ENCODE measurements at regions of chr17 and their contacts with region 1.

Region 1: DNA sequence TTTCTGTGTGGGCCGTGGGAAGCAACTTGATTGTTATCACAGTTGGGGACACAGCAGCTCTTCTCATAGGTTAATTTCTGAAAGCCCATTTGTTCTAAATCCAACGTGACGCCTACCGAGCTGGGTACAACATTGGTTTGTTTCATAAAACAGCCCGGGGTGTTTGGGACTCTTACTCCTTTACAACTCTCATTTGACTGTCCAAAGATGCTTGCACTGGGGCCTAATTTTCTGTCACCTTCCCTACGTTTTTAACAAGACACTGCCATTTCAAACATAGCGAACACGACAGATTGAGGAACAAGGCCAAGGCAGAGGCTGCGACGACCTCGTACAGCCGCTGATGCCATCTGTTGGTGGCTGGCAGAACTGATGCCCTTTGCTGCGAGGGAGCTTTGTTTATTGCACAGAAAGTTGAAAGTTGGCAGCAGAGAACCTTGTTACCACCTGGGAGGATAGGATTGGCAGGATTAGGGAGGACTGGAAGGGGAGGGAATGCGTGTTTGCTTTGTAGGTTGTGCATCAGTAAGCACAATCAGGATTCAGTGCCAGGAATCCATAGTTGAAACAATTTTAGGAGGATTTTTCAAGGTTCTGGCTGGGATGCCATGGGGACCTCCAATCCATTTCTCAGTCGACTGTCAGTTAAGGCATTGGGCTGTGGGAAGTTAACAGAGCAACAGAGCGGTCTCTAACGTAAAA is 98.3 kb downstream of the PITPNC1 start:
- DNase-seq: peak; percentile 84 to 87 (median 86)
- H3K4me3 ChIP-seq: peak overlapping the region in 1 of 2 donors; percentile 36
- H3K4me3 Mint-ChIP-seq: peak overlapping the region; percentile 76 to 86 (median 82)
- H3K27ac ChIP-seq: peak overlapping the region; percentile 64
- H3K27ac Mint-ChIP-seq: peak overlapping the region; percentile 94 to 97 (median 96)
- H3K4me1 ChIP-seq: peaks cover 61% of the 10 kb centered on the region
- H3K4me1 Mint-ChIP-seq: peaks cover 53 to 76% (median 63%) of the 10 kb centered on the region in 4 donors
- H3K27me3 ChIP-seq: no peaks in the 10 kb centered on the region
- H3K27me3 Mint-ChIP-seq: no peaks in the 10 kb centered on the region

Region 2: GRCh38 chr17:67105213-67105612 is 370.2 kb before region 1 on chr17:
- CTCF ChIA-PET with region 1: no interaction called
- POLR2A ChIA-PET with region 1: no interaction called
- intact Hi-C with region 1: no loop called
- DNase-seq: no peak
- H3K4me3 ChIP-seq: no peak overlapping the region
- H3K4me3 Mint-ChIP-seq: no peak overlapping the region
- H3K27ac ChIP-seq: no peak overlapping the region
- H3K27ac Mint-ChIP-seq: no peak overlapping the region
- H3K4me1 ChIP-seq: peaks cover 14% of the 10 kb centered on the region
- H3K4me1 Mint-ChIP-seq: peaks cover 26 to 47% (median 41%) of the 10 kb centered on the region in 4 donors
- H3K27me3 ChIP-seq: no peaks in the 10 kb centered on the region
- H3K27me3 Mint-ChIP-seq: no peaks in the 10 kb centered on the region

Region 3: GRCh38 chr17:67366193-67367157 is 108.9 kb before region 1 on chr17 and contains the start of gene PSMD12:
- CTCF ChIA-PET with region 1: interaction called, 605 read pairs
- POLR2A ChIA-PET with region 1: interaction called, 10 read pairs
- intact Hi-C with region 1: no loop called
- DNase-seq: peak; percentile 90 to 95 (median 92)
- H3K4me3 ChIP-seq: peak within 1 kb of the TSS; percentile 88 to 98
- H3K4me3 Mint-ChIP-seq: peak within 1 kb of the TSS; percentile 90 to 99 (median 98)
- H3K27ac ChIP-seq: peak within 1 kb of the TSS; percentile 94
- H3K27ac Mint-ChIP-seq: peak within 1 kb of the TSS; percentile 90 to 99 (median 98)
- H3K4me1 ChIP-seq: peaks cover 45% of the 10 kb centered on the region
- H3K4me1 Mint-ChIP-seq: peaks cover 27 to 51% (median 42%) of the 10 kb centered on the region in 4 donors
- H3K27me3 ChIP-seq: no peaks in the 10 kb centered on the region
- H3K27me3 Mint-ChIP-seq: no peaks in the 10 kb centered on the region
- total RNA-seq, gene PSMD12: 46.9 to 48.8 TPM

Region 4: GRCh38 chr17:67421869-67422273 is 53.5 kb before region 1 on chr17:
- CTCF ChIA-PET with region 1: interaction called, 47 read pairs
- POLR2A ChIA-PET with region 1: interaction called, 39 read pairs
- intact Hi-C with region 1: loop called (anchors 1 kb)
- DNase-seq: peak; percentile 78 to 89 (median 83)
- H3K4me3 ChIP-seq: peak overlapping the region in 1 of 2 donors; percentile 15
- H3K4me3 Mint-ChIP-seq: peak overlapping the region in 7 of 8 donors; percentile 19 to 80 (median 64)
- H3K27ac ChIP-seq: peak overlapping the region; percentile 77
- H3K27ac Mint-ChIP-seq: peak overlapping the region; percentile 85 to 98 (median 97)
- H3K4me1 ChIP-seq: peaks cover 65% of the 10 kb centered on the region
- H3K4me1 Mint-ChIP-seq: peaks cover 47 to 92% (median 72%) of the 10 kb centered on the region in 4 donors
- H3K27me3 ChIP-seq: no peaks in the 10 kb centered on the region
- H3K27me3 Mint-ChIP-seq: no peaks in the 10 kb centered on the region

Region 5: DNA sequence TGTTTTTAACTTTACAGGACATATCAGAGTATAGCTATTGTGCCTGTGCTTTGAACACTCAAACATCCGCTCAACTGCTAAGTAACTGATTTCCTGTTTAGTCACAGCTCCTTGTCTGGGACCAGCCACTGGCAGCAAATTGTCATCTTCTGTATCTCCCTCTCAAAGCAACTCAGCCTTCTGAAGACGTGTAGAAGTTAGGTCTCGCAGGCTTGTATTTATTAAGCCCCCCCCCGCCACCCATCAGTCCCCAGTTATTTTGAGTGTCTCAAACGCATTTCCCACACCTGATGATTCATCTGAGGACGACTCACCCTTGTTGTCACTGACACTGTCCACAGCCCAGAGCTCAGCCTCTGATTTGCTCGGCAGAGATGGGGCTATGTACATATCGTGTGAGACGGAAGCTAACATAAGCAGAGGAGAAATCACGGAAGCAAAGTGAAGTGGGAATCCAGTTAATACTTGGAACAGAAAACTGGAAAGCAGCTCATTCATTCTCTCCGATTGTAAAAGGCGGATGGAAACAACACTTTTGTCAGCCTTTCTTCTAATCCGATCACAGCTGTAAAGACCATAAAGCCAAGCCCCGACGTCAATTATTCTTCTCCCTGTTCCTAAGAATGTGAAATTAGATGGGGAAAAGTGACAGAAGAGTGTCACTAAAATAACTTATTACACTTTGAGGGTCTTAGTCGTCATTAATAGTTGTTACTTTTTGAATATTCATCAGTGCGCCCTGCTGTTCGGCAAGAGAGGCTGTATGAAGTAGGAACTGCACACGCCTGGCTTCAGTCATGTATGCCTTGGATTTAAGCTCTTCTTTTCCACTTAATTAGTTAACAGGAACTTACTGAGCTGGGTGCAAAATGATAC is 34.1 kb before region 1 on chr17:
- CTCF ChIA-PET with region 1: interaction called, 198 read pairs
- POLR2A ChIA-PET with region 1: interaction called, 170 read pairs
- intact Hi-C with region 1: loop called (anchors 1 kb)
- DNase-seq: peak; percentile 80 to 97 (median 86)
- H3K4me3 ChIP-seq: peak overlapping the region; percentile 4 to 48
- H3K4me3 Mint-ChIP-seq: peak overlapping the region; percentile 79 to 90 (median 86)
- H3K27ac ChIP-seq: peak overlapping the region; percentile 77
- H3K27ac Mint-ChIP-seq: peak overlapping the region; percentile 87 to 99 (median 98)
- H3K4me1 ChIP-seq: peaks cover 91% of the 10 kb centered on the region
- H3K4me1 Mint-ChIP-seq: peaks cover 48 to 92% (median 72%) of the 10 kb centered on the region in 4 donors
- H3K27me3 ChIP-seq: no peaks in the 10 kb centered on the region
- H3K27me3 Mint-ChIP-seq: no peaks in the 10 kb centered on the region

Region 6: DNA sequence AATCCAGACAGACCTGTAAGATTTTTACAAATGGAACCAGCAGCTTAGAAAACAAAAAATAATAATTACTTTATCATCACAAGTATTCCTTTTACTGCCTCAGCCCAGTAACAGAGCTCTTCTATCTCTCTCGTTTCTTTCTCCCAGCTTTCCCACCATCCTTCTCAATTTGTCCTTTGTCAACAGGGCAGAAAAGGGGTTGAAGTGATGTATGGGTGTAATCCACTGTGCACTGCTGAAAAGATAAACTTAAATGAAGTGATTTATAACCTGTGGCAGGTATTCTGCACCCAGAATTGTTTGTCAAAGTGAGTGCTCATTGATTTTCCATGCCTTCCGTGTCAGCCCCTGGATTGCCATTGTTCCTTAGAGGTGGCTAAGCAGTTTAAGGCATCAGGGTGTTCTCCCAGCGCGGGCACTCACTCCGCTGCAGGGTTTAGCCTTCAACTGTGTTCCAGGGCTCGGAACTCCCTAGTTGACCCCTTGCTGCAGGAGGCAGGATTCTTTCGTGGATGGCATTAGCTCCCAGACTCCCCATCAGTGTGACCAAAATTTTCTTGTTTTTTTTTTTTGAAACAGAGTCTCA is 15.4 kb before region 1 on chr17:
- CTCF ChIA-PET with region 1: interaction called, 80 read pairs
- POLR2A ChIA-PET with region 1: interaction called, 104 read pairs
- intact Hi-C with region 1: no loop called
- DNase-seq: no peak
- H3K4me3 ChIP-seq: no peak overlapping the region
- H3K4me3 Mint-ChIP-seq: no peak overlapping the region
- H3K27ac ChIP-seq: no peak overlapping the region
- H3K27ac Mint-ChIP-seq: peak overlapping the region in 4 of 7 donors; percentile 12 to 76 (median 65)
- H3K4me1 ChIP-seq: peaks cover 56% of the 10 kb centered on the region
- H3K4me1 Mint-ChIP-seq: peaks cover 43 to 90% (median 69%) of the 10 kb centered on the region in 4 donors
- H3K27me3 ChIP-seq: no peaks in the 10 kb centered on the region
- H3K27me3 Mint-ChIP-seq: no peaks in the 10 kb centered on the region

Region 7: DNA sequence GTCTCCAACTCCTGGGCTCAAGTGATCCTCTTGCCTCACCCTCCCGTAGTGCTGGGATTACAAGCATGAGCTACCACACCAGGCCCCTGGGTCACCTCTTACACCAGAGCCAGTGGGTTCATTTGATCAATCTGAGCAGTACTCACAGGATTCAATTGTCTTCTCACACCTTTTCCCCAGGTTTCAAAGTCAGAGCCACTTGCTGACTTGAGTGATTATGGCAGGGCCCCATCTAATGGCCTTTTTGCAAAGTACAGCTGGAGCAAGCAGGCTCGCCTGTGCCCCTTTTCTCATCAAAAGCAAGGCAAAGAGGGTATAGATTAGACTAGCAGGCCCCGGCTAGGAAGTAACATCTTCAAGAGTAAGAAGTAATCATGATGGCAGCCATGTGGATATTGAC is 127.6 kb after region 1 on chr17:
- CTCF ChIA-PET with region 1: interaction called, 6 read pairs
- POLR2A ChIA-PET with region 1: no interaction called
- intact Hi-C with region 1: loop called (anchors 2 kb)
- DNase-seq: peak; percentile 41 to 55 (median 47)
- H3K4me3 ChIP-seq: no peak overlapping the region
- H3K4me3 Mint-ChIP-seq: no peak overlapping the region
- H3K27ac ChIP-seq: no peak overlapping the region
- H3K27ac Mint-ChIP-seq: peak overlapping the region in 4 of 7 donors; percentile 26 to 86 (median 66)
- H3K4me1 ChIP-seq: no peaks in the 10 kb centered on the region
- H3K4me1 Mint-ChIP-seq: peaks cover 11 to 17% (median 16%) of the 10 kb centered on the region in 4 donors
- H3K27me3 ChIP-seq: no peaks in the 10 kb centered on the region
- H3K27me3 Mint-ChIP-seq: no peaks in the 10 kb centered on the region

Region 8: GRCh38 chr17:67637917-67638641 is 162.7 kb after region 1 on chr17:
- CTCF ChIA-PET with region 1: no interaction called
- POLR2A ChIA-PET with region 1: no interaction called
- intact Hi-C with region 1: no loop called
- DNase-seq: no peak
- H3K4me3 ChIP-seq: no peak overlapping the region
- H3K4me3 Mint-ChIP-seq: no peak overlapping the region
- H3K27ac ChIP-seq: no peak overlapping the region
- H3K27ac Mint-ChIP-seq: peak overlapping the region in 3 of 7 donors; percentile 3 to 72 (median 11)
- H3K4me1 ChIP-seq: no peaks in the 10 kb centered on the region
- H3K4me1 Mint-ChIP-seq: peaks cover 0 to 8% (median 3%) of the 10 kb centered on the region in 4 donors
- H3K27me3 ChIP-seq: no peaks in the 10 kb centered on the region
- H3K27me3 Mint-ChIP-seq: no peaks in the 10 kb centered on the region